Aorta (tissue), 5 donors: ENCODE measurements at regions of chr16 and their contacts with region 1.

Region 1: DNA sequence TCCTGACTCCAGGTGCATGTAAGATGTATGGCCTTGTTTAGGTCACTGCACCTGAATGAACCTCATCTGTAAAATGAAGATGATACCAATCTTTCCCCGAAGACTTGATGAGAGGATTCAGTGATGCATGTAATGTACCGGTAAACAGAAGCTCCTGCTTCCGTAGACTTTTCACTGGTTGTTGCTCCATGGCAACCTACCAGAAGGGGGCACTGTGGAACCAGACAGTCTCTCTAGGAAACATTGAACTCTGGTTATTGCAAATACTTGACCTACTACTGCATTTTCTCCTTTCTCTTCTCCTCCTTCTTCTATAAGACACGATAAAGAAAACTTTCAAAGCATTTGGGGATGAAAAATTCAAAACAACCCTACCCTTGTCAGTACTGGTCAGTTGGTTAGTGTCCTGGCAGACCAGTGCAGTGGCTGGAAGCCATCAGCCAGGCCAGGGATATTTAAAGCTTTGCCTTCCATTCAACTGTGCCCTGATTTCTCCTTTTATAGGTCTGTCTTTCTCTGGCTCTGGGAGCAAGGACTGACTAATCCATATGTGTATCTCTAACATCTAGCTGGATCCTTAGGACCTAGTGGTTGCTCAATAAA is 667.4 kb upstream of the SALL1 start:
- DNase-seq: peak in 1 of 2 donors; percentile 44
- ATAC-seq: no peak
- H3K4me3 ChIP-seq: no peak overlapping the region
- H3K27ac ChIP-seq: no peak overlapping the region
- H3K4me1 ChIP-seq: no peaks in the 10 kb centered on the region
- H3K27me3 ChIP-seq: no peaks in the 10 kb centered on the region

Region 2: DNA sequence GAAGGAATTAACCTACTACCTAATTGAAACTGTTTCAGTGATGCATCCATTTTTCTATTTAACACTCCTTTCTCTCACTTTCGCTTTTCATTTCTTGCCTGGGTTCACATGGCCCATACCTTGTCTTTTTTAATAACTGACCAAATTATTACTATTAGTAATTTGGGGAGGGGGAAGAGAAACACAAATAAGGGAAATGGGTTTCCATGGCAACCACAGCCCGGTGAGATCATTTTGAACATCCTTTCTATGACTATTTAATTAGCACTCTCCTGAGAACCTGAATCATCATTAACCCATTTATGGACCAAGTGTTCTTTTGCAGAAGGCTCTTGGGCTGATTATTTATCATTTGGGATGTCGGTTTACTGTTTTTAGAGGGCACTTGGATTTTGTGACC is 39.2 kb before region 1 on chr16:
- intact Hi-C with region 1: no loop called
- DNase-seq: no peak
- ATAC-seq: no peak
- H3K4me3 ChIP-seq: no peak overlapping the region
- H3K27ac ChIP-seq: no peak overlapping the region
- H3K4me1 ChIP-seq: no peaks in the 10 kb centered on the region
- H3K27me3 ChIP-seq: no peaks in the 10 kb centered on the region

Region 3: DNA sequence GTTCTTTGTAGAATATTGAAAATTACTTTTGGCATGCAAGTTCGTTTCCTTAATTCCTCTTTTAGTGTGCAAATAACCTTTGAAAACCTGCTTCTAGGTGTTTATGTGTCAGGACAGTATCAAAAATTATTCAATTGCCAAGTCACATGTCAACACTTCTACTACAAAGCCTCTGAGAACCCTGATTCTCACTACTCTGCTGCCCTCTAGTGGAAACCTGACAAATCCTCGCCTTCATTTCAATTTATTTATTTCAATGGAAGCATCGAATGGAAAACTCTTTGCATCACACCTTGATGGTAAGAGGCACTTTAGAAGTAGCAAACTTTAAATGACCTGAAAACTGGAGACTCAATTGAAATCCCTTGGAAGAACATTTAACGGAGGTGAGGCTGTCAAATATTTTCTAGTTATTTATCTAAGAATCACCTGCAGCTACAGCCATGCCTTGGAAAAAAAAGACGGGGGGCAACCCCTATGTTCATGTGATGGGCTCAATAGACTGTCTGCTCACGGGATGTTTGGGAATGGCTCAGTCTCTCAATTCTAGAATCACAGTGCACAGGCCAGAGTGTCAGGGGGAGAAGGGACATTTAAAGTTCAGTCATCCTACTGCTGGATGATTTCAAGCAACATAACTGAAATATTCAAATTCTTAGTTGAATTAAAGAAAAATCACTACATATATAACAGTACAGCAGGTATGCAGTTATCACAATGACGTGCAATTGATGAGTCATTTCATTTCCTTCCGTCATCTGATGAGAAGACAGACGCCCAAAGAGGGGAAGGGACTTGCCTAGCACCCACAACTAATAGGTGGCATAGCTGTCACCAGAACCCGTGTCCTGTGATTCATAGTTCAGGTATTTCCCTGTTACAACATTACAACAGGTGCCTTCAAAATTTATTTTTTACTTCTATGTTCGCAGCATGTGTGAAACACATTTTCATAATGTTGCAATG is 164.6 kb after region 1 on chr16:
- intact Hi-C with region 1: loop called (anchors 5 to 10 kb)
- DNase-seq: no peak
- ATAC-seq: no peak
- H3K4me3 ChIP-seq: no peak overlapping the region
- H3K27ac ChIP-seq: no peak overlapping the region
- H3K4me1 ChIP-seq: no peaks in the 10 kb centered on the region
- H3K27me3 ChIP-seq: no peaks in the 10 kb centered on the region